Activated CD4-positive, alpha-beta memory T cell treated with anti-CD3 and anti-CD28 coated beads for 36 hours (primary cell): ENCODE measurements at regions of chr17 and their contacts with region 1.

Region 1: GRCh38 chr17:39863918-39864746 is at the start of gene IKZF3:
- DNase-seq: peak; percentile 93
- H3K4me3 Mint-ChIP-seq: peak within 1 kb of the TSS; percentile 83
- H3K27ac Mint-ChIP-seq: peak within 1 kb of the TSS; percentile 84
- H3K4me1 Mint-ChIP-seq: peaks cover 65% of the 10 kb centered on the region
- H3K27me3 Mint-ChIP-seq: no peaks in the 10 kb centered on the region
- total RNA-seq, gene IKZF3: 51.2 to 52.0 TPM

Region 2: DNA sequence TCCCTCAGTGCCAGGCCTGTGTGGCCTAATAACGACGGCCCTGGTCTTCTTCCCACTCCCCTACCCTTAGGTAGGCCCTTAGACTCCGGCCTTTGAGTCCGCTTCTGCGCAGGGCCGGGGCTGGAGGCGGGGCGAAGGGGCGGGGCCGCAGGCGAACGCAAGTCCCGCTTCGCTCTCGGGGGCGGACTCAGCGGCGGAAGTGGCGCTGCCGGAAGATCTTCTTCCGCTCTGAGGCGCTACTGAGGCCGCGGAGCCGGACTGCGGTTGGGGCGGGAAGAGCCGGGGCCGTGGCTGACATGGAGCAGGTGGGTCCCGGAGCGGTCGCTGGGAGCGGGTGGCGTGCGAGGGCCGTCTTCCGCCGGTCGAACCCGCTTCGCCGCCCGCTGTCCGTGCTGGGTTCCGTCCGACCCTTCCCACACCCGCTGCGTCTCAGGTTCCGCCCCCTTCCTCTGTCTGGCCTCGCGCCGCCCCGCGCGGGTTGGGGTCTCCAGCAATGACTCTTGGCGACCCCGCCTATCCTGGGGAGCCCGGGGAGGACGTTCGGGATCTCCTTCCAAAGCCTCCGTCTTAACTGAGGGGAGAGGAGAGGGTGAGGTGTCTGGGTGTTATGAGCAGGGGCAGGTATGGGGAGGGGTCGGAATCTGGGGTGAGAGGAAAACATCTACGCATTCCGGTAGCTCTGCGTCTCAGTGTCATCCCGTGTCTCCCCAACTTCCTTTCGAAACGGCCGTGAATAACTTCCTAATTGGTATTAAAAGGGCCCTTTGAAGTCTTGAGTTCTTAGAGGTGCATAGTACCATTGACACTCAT is 227.0 kb before region 1 on chr17 and contains the start of gene STARD3:
- CTCF ChIA-PET with region 1: no interaction called
- POLR2A ChIA-PET with region 1: no interaction called
- intact Hi-C with region 1: loop called (anchors 5 kb)
- DNase-seq: peak; percentile 95
- H3K4me3 Mint-ChIP-seq: peak within 1 kb of the TSS; percentile 88
- H3K27ac Mint-ChIP-seq: peak within 1 kb of the TSS; percentile 83
- H3K4me1 Mint-ChIP-seq: peaks cover 51% of the 10 kb centered on the region
- H3K27me3 Mint-ChIP-seq: no peaks in the 10 kb centered on the region
- total RNA-seq, gene STARD3: 53.6 to 60.3 TPM

Region 3: DNA sequence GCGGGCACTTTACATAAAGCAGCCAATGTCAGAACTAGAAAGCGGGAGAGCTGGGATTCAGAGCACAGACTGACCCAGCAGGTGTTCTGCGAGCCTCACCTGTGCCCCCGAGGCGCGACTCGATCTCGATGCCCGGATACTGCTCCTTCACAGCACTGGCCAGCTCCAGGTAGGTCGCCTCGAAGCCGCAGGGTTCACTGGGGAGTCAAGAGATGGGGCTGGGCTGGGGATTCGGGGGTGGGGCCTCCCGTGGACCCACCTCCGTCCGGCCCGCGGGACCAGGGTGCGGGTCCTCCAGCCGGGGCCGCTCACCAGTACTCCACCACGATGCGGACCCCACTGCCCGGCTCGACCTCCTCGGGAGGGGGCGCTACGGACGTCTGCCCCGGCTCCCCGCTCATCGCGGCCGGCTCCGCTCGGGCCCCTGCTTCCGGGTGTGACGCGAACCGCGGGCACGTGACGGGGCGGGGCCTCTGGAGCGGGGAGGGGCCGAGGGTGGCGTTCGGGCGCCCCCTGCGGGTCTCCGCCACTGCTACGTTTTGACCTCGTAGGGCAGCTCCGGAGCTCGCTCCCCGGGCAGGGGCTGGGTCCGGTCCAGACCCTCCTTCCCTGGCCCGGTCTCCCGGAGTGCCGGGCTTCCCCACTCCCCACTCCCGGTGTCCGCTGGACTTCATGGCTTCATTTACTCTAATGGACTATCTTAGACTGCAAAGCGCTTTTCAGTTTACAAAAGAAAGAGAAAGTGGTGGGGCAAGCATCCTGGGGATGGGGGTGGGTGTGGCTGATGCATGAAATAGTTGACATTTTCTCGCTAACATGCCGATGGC is 133.8 kb before region 1 on chr17 and contains the start of gene MIEN1:
- CTCF ChIA-PET with region 1: interaction called, 16 read pairs
- POLR2A ChIA-PET with region 1: no interaction called
- intact Hi-C with region 1: loop called (anchors 1 kb)
- DNase-seq: peak; percentile 95
- H3K4me3 Mint-ChIP-seq: peak within 1 kb of the TSS; percentile 88
- H3K27ac Mint-ChIP-seq: peak within 1 kb of the TSS; percentile 73
- H3K4me1 Mint-ChIP-seq: peaks cover 12% of the 10 kb centered on the region
- H3K27me3 Mint-ChIP-seq: no peaks in the 10 kb centered on the region
- total RNA-seq, gene MIEN1: 41.0 to 43.8 TPM

Region 4: DNA sequence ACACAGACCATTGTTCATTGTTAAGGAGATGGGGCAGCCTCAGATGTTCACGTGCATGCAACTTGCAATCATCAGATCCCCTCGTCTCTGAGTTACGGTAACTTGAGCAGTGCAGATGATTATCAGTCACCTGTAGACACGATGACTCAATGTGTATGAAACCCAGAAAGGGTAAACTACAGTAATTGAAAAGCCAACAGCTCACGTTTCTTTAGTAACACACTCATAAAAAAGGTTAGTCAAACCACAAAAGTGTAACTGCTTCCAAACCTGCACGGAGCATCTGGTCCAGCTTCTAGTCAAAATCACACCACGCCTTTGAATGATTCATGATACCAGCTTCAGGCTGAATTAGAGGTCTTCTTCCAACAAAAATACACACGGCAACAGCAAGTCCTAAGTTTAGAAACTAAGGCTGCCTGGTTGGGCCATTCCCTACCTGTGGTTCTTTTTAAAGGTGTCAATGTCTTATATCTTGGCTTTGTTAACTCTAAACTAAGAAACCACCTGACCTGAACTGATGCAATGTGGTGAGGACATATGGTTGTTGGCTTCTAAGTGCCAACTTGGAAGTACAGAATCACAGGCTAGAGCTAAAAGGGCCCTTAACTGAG is 94.1 kb before region 1 on chr17:
- CTCF ChIA-PET with region 1: interaction called, 9 read pairs
- POLR2A ChIA-PET with region 1: interaction called, 20 read pairs
- intact Hi-C with region 1: loop called (anchors 1 kb)
- DNase-seq: peak; percentile 82
- H3K4me3 Mint-ChIP-seq: no peak overlapping the region
- H3K27ac Mint-ChIP-seq: peak overlapping the region; percentile 85
- H3K4me1 Mint-ChIP-seq: peaks cover 96% of the 10 kb centered on the region
- H3K27me3 Mint-ChIP-seq: no peaks in the 10 kb centered on the region

Region 5: GRCh38 chr17:39794249-39794970 is 69.7 kb before region 1 on chr17:
- CTCF ChIA-PET with region 1: interaction called, 5 read pairs
- POLR2A ChIA-PET with region 1: interaction called, 7 read pairs
- intact Hi-C with region 1: loop called (anchors 1 kb)
- DNase-seq: peak; percentile 41
- H3K4me3 Mint-ChIP-seq: peak overlapping the region; percentile 2
- H3K27ac Mint-ChIP-seq: peak overlapping the region; percentile 83
- H3K4me1 Mint-ChIP-seq: peaks cover 76% of the 10 kb centered on the region
- H3K27me3 Mint-ChIP-seq: no peaks in the 10 kb centered on the region

Region 6: DNA sequence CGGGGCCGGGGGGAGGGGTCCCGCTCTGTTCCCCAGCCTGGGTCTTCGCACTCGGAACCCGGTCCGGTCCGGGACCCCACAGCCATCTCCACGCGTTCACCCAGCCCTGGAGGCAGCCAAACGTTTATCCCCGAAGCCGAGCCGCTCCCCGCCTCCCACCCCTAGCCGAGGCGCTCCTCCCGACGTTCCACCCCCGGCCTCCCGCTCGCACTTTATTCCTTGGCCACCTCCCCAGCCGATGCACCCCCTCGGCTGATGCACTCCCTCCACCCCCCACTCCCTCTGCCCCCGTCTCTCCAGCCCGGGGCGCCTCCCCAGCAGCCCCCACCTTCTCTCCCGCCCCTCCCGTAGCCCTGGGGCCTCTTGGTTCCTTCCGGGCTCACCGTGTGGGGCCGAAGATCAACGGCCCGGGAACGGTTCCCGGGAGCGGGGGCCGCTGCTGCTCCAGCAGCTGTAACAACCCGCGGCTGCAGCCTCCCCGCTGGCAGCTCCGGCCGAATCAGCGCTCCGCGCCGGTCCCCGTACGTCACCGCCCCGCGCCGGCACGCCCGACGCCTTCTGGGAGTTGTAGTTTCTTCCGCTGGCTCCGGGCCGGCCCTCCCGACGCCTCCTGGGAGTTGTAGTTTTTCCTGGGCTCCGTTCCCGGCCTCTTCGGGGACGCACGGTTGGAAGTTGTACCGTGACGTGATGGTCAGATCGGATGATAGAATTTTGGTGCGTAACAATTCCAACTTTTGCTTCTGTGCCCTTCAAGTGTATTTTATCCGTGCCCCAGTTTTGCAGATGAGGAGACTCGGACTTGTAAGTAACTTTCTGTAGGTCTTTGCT is 63.2 kb after region 1 on chr17 and contains the starts of genes LRRC3C and ORMDL3:
- CTCF ChIA-PET with region 1: no interaction called
- POLR2A ChIA-PET with region 1: no interaction called
- intact Hi-C with region 1: loop called (anchors 2 kb)
- DNase-seq: peak; percentile 95
- H3K4me3 Mint-ChIP-seq: peak within 1 kb of the TSS; percentile 85
- H3K27ac Mint-ChIP-seq: peak within 1 kb of the TSS; percentile 90
- H3K4me1 Mint-ChIP-seq: peaks cover 52% of the 10 kb centered on the region
- H3K27me3 Mint-ChIP-seq: no peaks in the 10 kb centered on the region
- total RNA-seq, gene LRRC3C: not detected
- total RNA-seq, gene ORMDL3: 53.7 to 58.3 TPM

Region 7: GRCh38 chr17:39980351-39981206 is 116.4 kb after region 1 on chr17 and contains the start of gene PSMD3:
- CTCF ChIA-PET with region 1: interaction called, 5 read pairs
- POLR2A ChIA-PET with region 1: interaction called, 3 read pairs
- intact Hi-C with region 1: loop called (anchors 1 kb)
- DNase-seq: peak; percentile 99
- H3K4me3 Mint-ChIP-seq: peak within 1 kb of the TSS; percentile 95
- H3K27ac Mint-ChIP-seq: peak within 1 kb of the TSS; percentile 88
- H3K4me1 Mint-ChIP-seq: peaks cover 30% of the 10 kb centered on the region
- H3K27me3 Mint-ChIP-seq: peaks cover 6% of the 10 kb centered on the region
- total RNA-seq, gene PSMD3: 120 to 124 TPM